ENCODE measurements at regions of chr2 and their contacts with region 1.

Region 1: DNA sequence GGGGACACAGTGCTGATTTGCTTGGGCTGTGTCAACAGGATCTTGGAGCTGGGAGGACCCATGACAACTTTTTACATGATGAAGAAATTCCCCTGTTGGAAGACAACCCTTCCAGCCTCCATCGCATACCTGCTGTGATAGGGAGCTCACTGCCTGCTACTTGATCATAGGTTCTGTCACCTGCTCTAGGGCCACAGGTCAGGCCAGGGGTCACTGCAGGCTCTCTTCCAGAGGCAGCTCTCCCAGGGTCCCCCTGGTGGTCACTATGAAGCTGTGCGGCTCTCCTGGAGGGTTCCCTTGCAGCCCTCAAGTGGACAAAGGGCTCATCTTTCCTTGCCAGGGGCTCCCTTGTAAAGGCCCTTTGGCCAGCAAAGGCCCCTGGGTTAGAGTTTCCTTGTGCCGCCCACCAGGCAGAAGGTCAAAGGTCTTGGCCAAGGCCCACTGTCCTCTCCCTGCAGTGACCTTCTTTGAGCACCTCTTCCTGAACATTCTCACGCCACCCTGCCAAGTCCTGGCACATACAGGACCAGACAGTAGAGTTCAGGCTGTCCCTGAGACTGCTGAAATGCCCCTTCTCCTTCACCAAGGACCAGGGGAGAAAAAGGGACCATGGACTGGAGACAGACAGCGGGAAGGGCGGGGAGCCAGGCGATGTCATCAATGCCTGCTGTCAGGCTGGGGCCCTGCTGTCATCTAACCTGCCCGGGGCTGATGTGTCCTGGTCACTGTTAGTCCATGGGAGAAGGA is 345.1 kb downstream of the DYSF start:
- DNase-seq: peak; percentile 71 to 87 (median 79)
- ATAC-seq: peak; percentile 97
- H3K4me3 ChIP-seq: no peak overlapping the region
- H3K27ac ChIP-seq: no peak overlapping the region
- H3K4me1 ChIP-seq: no peaks in the 10 kb centered on the region
- H3K27me3 ChIP-seq: peaks cover 0 to 14% of the 10 kb centered on the region in 2 experiments; a peak in 1 of 5 replicates
- CTCF ChIP-seq: peak; percentile 89 to 97 (median 93)
- EP300 ChIP-seq: no peak
- POLR2A ChIP-seq: no peak
- RAD21 ChIP-seq: peak; percentile 83 to 94

Region 2: DNA sequence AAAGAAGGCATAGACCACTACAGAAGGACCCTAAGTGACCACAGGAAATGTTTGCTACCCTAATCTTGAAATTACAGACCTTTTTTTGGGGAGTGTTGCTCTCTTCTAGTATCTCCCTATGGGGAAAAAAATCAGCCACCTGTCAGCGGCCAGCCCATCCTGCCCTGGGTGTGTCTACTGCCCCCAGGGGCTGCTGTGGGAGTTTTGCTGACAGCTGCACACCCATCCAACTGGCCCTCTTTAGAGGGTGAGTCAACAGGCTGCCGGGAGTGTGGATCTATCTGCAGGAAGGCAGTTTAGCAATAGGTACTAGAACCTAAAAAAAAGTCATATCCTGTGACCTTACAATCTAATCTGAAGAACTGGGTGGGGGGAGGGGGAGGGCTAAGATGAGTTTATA is 345.9 kb before region 1 on chr2:
- CTCF ChIA-PET with region 1: no interaction called
- POLR2A ChIA-PET with region 1: no interaction called
- in situ Hi-C with region 1: no loop called
- intact Hi-C with region 1: no loop called
- DNase-seq: peak; percentile 85 to 89 (median 88)
- ATAC-seq: peak; percentile 93
- H3K4me3 ChIP-seq: no peak overlapping the region
- H3K27ac ChIP-seq: no peak overlapping the region; the same call in 2 of the 3 replicates
- H3K4me1 ChIP-seq: peaks cover 20 to 31% of the 10 kb centered on the region in 2 experiments
- H3K27me3 ChIP-seq: no peaks in the 10 kb centered on the region
- CTCF ChIP-seq: peak; percentile 55 to 74 (median 62)
- EP300 ChIP-seq: peak; percentile 28; the same call in 1 of the 2 replicates
- POLR2A ChIP-seq: no peak
- RAD21 ChIP-seq: peak in 1 of 2 experiments; percentile 51; a peak in 2 of 4 replicates

Region 3: DNA sequence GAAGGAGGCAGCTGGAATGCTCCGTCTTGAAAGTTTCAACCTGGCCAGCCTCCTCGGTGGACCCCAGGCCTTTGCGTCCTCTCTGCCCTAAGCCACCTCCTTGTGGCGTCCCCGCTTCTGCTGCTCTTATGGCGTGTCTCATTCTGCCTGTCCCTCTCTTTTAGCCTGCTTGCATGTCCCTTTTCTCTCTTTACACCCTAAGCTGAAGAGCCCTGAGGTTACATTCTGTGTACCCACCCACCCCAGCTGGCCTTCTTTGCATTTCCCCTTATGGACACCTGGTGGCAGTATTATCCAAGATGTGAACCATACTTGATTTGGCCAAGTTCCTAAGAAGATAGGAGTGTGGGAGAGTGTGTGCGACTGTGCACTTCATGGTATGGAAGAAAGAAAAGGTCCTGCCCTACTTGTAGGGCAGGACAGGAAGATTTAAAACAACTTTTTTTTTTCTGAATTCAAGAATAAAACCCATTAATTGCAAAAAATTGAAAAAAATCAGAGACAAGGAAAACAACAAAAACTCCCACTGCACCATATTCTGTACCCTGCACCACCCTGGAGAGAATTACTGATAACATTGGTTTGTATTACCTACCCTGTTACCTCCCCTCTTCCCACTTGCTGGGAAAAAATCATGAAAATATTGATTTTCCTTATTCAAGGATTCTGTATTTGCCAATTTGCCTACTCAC is 267.7 kb before region 1 on chr2:
- CTCF ChIA-PET with region 1: no interaction called
- POLR2A ChIA-PET with region 1: no interaction called
- in situ Hi-C with region 1: no loop called
- intact Hi-C with region 1: loop called (anchors 1 kb)
- DNase-seq: peak; percentile 59 to 80 (median 76)
- ATAC-seq: peak; percentile 96
- H3K4me3 ChIP-seq: no peak overlapping the region
- H3K27ac ChIP-seq: no peak overlapping the region
- H3K4me1 ChIP-seq: no peaks in the 10 kb centered on the region; a peak in 1 of 5 replicates
- H3K27me3 ChIP-seq: peaks cover 11 to 32% of the 10 kb centered on the region in 2 experiments; a peak in 4 of 5 replicates
- CTCF ChIP-seq: peak; percentile 72 to 80 (median 72)
- EP300 ChIP-seq: no peak
- POLR2A ChIP-seq: no peak
- RAD21 ChIP-seq: peak; percentile 59 to 77

Region 4: DNA sequence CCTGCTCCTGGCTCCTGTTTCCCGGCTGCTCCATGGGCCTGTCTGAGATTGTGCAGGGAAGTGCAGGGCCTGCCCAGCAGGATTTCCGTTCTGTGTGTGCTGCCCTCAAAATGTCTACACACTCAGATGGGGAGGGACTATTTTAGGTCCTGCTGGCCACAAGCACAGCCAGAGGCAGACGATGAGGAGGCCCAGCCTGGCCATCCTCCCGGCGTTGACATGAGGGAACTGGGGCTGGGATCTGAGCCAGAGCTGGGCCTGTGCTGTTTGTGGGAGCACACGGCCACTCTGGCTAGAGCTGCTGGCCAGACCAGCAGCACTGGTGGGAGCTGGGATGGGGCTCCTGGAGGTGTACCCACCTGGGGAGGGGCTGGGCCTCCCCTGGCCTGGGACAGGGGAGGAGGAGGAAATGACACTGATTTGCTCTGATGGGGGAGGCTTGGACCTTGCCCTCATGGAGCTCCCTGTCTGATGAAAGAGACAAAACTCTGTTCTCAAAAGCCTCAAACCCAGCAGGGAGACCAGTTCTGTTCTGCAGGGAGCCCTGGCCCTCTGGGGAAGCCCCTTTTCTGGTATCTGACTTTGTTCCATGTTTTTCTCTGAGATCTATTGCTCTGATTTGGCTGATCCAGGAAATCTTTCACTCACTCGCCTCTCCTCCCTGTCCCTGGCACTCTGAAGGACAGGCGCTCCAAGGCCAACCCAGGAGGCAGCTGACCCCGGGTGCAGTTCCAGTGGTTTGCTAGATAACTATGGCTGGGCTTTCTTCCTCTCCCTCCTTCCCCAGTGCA is 183.3 kb before region 1 on chr2:
- CTCF ChIA-PET with region 1: interaction called, 5 read pairs
- POLR2A ChIA-PET with region 1: no interaction called
- in situ Hi-C with region 1: no loop called
- intact Hi-C with region 1: loop called (anchors 5 kb)
- DNase-seq: peak in 1 of 4 experiments; percentile 3
- ATAC-seq: no peak
- H3K4me3 ChIP-seq: no peak overlapping the region
- H3K27ac ChIP-seq: no peak overlapping the region
- H3K4me1 ChIP-seq: peaks cover 0 to 4% of the 10 kb centered on the region in 2 experiments; a peak in 1 of 5 replicates
- H3K27me3 ChIP-seq: peaks cover 0 to 27% of the 10 kb centered on the region in 2 experiments; a peak in 3 of 5 replicates
- CTCF ChIP-seq: no peak
- EP300 ChIP-seq: no peak
- POLR2A ChIP-seq: no peak
- RAD21 ChIP-seq: no peak

Region 5: GRCh38 chr2:72150157-72150865 is 351.9 kb after region 1 on chr2:
- CTCF ChIA-PET with region 1: interaction called, 13 read pairs
- POLR2A ChIA-PET with region 1: no interaction called
- in situ Hi-C with region 1: loop called (anchors 10 kb)
- intact Hi-C with region 1: loop called (anchors 1 kb)
- DNase-seq: peak; percentile 74 to 81 (median 76)
- ATAC-seq: peak; percentile 93
- H3K4me3 ChIP-seq: no peak overlapping the region
- H3K27ac ChIP-seq: no peak overlapping the region
- H3K4me1 ChIP-seq: peaks cover 0 to 20% of the 10 kb centered on the region in 2 experiments; a peak in 2 of 5 replicates
- H3K27me3 ChIP-seq: peaks cover 13 to 63% of the 10 kb centered on the region in 2 experiments; a peak in 4 of 5 replicates
- CTCF ChIP-seq: peak; percentile 82 to 87 (median 83)
- EP300 ChIP-seq: no peak
- POLR2A ChIP-seq: no peak
- RAD21 ChIP-seq: peak; percentile 92 to 94

Region 6: GRCh38 chr2:72579591-72580180 is 781.2 kb after region 1 on chr2:
- CTCF ChIA-PET with region 1: no interaction called
- POLR2A ChIA-PET with region 1: no interaction called
- in situ Hi-C with region 1: loop called (anchors 10 kb)
- intact Hi-C with region 1: no loop called
- DNase-seq: peak in 3 of 4 experiments; percentile 7 to 62 (median 17)
- ATAC-seq: peak; percentile 77
- H3K4me3 ChIP-seq: no peak overlapping the region
- H3K27ac ChIP-seq: no peak overlapping the region
- H3K4me1 ChIP-seq: no peaks in the 10 kb centered on the region
- H3K27me3 ChIP-seq: no peaks in the 10 kb centered on the region
- CTCF ChIP-seq: peak; percentile 49 to 81 (median 54); a peak in 4 of 6 replicates
- EP300 ChIP-seq: no peak
- POLR2A ChIP-seq: no peak
- RAD21 ChIP-seq: peak; percentile 91 to 94

Measured in K562 (cell line).